MCF 10A (cell line): ENCODE measurements at regions of chr1 and their contacts with region 1.

Region 1: GRCh38 chr1:8182034-8182761 is 135.7 kb upstream of the SLC45A1 start:
- DNase-seq: peak; percentile 90
- H3K4me3 Mint-ChIP-seq: peak overlapping the region; percentile 33
- H3K27ac Mint-ChIP-seq: peak overlapping the region; percentile 96
- H3K4me1 Mint-ChIP-seq: peaks cover 24% of the 10 kb centered on the region
- H3K27me3 Mint-ChIP-seq: no peaks in the 10 kb centered on the region
- CTCF ChIP-seq: no peak

Region 2: DNA sequence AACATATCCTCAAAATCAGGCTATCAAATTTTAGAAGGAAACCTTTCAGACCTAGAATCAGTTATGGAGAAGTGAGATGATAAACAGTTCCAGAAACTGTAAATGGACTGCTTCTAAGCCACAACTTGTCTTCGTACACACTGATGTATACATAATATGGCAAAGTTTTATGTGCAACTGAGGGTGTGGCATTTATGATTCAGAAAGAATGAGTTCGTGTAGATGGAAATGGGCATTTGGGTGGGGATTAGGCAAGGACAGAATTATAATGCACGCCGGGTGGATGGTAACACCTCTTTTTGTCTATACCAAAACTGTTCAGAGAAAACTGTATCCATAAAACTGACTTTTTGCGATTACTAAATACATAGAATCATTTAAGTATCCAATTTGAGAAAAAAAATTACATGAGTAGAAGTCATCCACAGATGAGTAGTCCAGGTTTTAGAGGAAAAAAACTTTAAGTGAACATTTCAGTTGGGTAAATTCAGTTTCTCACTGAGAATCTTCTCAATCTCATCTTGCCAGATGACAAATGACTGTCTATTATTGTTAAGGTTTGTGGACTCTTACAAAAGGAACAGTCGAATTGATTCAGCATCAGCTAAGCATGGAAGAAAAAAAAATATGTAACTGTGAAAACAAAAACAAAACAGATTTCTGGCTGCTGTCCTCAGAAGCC is 178.6 kb before region 1 on chr1:
- CTCF ChIA-PET with region 1: no interaction called
- POLR2A ChIA-PET with region 1: no interaction called
- intact Hi-C with region 1: no loop called
- DNase-seq: peak; percentile 58
- H3K4me3 Mint-ChIP-seq: peak overlapping the region; percentile 49
- H3K27ac Mint-ChIP-seq: peak overlapping the region; percentile 84
- H3K4me1 Mint-ChIP-seq: peaks cover 34% of the 10 kb centered on the region
- H3K27me3 Mint-ChIP-seq: no peaks in the 10 kb centered on the region
- CTCF ChIP-seq: no peak

Region 3: DNA sequence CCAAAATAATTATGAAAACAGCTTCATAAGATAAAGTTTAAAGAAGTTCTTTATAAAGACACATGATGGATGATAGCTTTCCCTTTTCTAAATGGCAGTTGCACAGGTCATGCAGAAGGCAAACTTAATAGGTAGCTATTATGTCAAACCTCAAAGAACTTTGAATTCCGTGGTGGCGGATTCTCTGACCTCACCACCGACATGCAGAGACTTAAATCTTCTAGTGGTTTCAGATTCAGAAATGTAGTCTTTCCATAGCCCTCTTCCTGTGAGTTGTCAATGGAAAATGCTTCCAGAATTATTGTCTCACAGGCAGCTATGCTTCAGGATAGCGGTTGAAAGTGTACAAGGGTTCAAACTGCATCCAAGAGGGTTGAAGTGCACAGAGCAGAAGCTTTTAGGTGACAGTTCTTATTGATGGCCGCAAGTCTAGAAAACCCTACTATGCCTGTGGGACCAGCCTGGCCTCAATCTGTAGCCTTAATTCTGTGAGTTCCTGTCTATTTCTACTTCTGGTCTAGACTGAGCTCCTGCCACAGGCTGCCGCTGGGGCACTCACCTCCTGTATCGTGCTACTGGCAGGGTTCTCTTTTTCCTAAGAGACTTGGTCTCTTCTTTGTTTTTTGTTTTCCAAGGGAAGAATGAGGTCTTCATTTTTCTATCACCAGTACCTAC is 39.1 kb before region 1 on chr1:
- CTCF ChIA-PET with region 1: no interaction called
- POLR2A ChIA-PET with region 1: interaction called, 3 read pairs
- intact Hi-C with region 1: loop called (anchors 5 kb)
- DNase-seq: no peak
- H3K4me3 Mint-ChIP-seq: no peak overlapping the region
- H3K27ac Mint-ChIP-seq: no peak overlapping the region
- H3K4me1 Mint-ChIP-seq: peaks cover 22% of the 10 kb centered on the region
- H3K27me3 Mint-ChIP-seq: no peaks in the 10 kb centered on the region
- CTCF ChIP-seq: no peak

Region 4: GRCh38 chr1:8169364-8170058 is 12.7 kb before region 1 on chr1:
- CTCF ChIA-PET with region 1: interaction called, 3 read pairs
- POLR2A ChIA-PET with region 1: interaction called, 10 read pairs
- intact Hi-C with region 1: no loop called
- DNase-seq: peak; percentile 77
- H3K4me3 Mint-ChIP-seq: peak overlapping the region; percentile 38
- H3K27ac Mint-ChIP-seq: peak overlapping the region; percentile 94
- H3K4me1 Mint-ChIP-seq: peaks cover 21% of the 10 kb centered on the region
- H3K27me3 Mint-ChIP-seq: no peaks in the 10 kb centered on the region
- CTCF ChIP-seq: no peak

Region 5: DNA sequence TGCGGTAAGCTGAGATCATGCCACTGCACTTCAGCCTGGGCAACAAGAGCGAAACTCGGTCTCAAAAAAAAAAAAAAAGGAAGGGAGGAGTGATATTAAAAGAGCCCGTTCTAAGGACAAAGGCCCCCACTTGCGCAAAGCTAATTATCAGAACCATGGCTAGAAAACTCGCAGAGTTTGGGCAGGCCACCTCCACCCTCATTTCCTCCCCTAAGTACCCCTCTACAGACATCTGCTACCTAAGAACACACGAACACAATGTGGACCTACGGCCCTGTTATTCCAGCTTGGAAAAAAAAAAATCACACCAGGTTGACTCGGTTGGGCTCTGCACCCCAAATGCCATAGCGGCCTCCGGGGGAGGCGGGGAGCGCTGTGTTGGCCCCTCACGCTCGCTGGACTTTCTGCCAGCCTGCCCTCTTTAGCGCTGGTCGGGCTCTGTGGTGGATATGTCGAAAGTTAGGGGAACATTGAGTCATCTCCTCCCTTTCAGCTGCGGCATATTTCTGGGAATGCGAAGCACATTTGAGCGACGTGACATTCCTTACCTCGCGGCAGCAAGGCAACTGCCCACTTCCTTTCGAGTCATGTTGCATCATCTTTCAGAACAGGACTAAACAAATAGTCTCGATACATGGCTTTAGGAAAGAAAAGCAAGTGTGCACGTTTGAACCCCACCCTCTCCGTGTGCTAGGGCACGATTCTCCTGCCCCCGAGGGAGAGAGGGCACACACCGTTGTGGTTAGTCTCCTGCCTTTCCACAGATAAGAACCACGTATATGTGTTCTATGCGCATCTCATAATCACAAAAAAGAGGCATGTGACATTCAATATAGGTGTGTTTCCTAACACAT is 29.6 kb after region 1 on chr1:
- CTCF ChIA-PET with region 1: no interaction called
- POLR2A ChIA-PET with region 1: interaction called, 7 read pairs
- intact Hi-C with region 1: loop called (anchors 1 kb)
- DNase-seq: peak; percentile 99
- H3K4me3 Mint-ChIP-seq: peak overlapping the region; percentile 51
- H3K27ac Mint-ChIP-seq: peak overlapping the region; percentile 85
- H3K4me1 Mint-ChIP-seq: peaks cover 26% of the 10 kb centered on the region
- H3K27me3 Mint-ChIP-seq: no peaks in the 10 kb centered on the region
- CTCF ChIP-seq: no peak

Region 6: DNA sequence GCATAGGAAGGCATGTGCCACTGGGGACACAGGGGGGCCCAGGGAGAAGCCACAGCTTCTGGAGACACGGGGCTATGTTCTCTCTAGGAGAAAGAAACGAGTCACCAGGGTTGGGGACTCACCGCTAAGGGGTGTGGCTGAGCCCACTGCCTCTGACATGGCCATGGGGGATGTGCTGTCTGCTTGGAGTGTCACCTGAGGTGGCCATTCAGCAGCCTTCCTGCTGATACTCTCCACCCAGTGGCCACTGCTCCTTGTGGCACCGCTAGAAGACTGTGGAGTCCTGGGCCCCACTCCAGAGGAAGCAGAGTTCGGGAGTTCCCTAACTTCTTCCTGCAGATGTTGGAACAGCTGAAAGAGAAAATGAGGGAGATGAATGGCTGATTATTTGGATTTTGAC is 44.5 kb after region 1 on chr1:
- CTCF ChIA-PET with region 1: no interaction called
- POLR2A ChIA-PET with region 1: no interaction called
- intact Hi-C with region 1: no loop called
- DNase-seq: no peak
- H3K4me3 Mint-ChIP-seq: no peak overlapping the region
- H3K27ac Mint-ChIP-seq: peak overlapping the region; percentile 77
- H3K4me1 Mint-ChIP-seq: peaks cover 30% of the 10 kb centered on the region
- H3K27me3 Mint-ChIP-seq: no peaks in the 10 kb centered on the region
- CTCF ChIP-seq: no peak

Region 7: DNA sequence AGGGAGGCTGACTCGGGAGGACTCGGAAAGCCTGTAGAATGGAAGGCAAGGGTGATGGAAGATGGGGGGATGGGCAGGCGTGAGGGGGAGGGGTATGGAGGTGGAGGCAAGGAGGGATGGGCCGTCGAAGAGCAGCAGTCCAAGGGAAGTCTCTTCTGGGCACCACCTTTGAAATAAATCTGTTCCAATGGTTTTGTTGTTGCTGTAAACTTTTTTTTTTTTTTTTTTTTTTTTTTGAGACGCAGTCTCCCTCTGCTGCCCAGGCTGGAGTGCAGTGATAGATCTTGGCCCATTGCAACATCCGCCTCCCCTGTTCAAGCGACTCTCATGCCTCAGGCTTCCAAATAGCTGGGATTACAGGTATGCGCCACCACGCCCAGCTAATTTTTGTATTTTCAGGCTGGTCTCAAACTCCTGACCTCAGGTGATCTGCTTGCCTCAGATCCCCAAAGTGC is 56.7 kb after region 1 on chr1:
- CTCF ChIA-PET with region 1: no interaction called
- POLR2A ChIA-PET with region 1: interaction called, 3 read pairs
- intact Hi-C with region 1: loop called (anchors 1 kb)
- DNase-seq: peak; percentile 88
- H3K4me3 Mint-ChIP-seq: no peak overlapping the region
- H3K27ac Mint-ChIP-seq: peak overlapping the region; percentile 86
- H3K4me1 Mint-ChIP-seq: peaks cover 14% of the 10 kb centered on the region
- H3K27me3 Mint-ChIP-seq: no peaks in the 10 kb centered on the region
- CTCF ChIP-seq: peak; percentile 37